ENCODE measurements at regions of chr7 and their contacts with region 1.

Region 1: DNA sequence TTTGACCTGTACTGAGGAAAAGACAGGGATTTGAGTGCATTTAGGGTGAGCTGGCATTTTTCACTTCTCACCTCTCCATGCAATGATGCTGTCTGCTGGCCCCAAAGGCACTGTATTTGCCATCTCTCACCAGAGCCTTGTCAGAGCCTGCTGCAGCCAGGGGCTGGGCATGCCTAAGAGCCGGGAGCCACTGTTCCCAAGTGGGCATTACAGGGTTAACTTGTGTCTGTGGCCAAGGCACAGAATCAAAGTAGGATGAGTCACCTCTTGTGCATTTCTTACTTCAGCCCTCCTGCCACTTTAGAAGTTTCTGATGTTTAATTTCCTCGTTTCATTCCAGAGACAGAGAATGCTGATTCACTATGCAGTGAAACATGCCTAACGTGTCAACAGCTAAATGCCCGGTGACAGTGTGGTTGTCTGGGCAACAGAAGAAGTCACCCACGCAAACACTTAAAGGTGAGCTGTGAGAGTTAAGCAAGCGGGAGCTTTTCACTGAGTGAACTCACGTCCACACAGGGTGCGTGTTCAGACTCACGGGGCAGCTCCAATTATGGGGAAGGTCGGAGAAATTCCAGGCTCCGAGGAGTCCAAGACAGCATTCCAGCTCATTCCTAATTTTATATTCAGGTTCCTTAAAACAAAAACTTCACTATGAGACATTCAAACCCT is 57.1 kb upstream of the IGFBP3 start:
- DNase-seq: peak; percentile 91 to 100
- H3K4me3 ChIP-seq: peak overlapping the region; percentile 23; the same call in 1 of the 2 replicates
- H3K27ac ChIP-seq: peak overlapping the region; percentile 97
- H3K4me1 ChIP-seq: peaks cover 52% of the 10 kb centered on the region
- H3K27me3 ChIP-seq: no peaks in the 10 kb centered on the region
- CTCF ChIP-seq: no peak

Region 2: DNA sequence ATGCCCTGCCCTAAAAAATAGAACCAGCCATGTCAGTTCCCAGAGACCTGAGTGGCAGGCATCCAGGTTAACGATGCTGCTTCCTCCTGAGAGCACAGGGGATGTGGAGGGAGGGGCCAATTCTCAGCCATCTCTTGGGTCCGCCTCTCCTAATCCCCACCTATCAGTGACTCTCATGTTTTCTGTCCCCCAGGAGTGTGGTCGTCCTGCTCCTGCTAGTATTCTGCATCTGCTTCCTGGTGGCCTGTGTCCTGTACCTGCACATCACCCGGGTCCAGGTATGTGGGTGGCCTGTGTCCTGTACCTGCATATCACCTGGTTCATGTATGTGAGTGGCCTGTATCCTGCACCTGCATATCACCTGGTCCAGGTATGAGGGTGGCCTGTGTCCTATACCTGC is 298.6 kb before region 1 on chr7:
- CTCF ChIA-PET with region 1: no interaction called
- POLR2A ChIA-PET with region 1: no interaction called
- intact Hi-C with region 1: no loop called
- DNase-seq: no peak
- H3K4me3 ChIP-seq: no peak overlapping the region
- H3K27ac ChIP-seq: no peak overlapping the region
- H3K4me1 ChIP-seq: no peaks in the 10 kb centered on the region
- H3K27me3 ChIP-seq: peaks cover 78% of the 10 kb centered on the region
- CTCF ChIP-seq: no peak

Region 3: GRCh38 chr7:45881759-45882464 is 96.2 kb before region 1 on chr7:
- CTCF ChIA-PET with region 1: no interaction called
- POLR2A ChIA-PET with region 1: interaction called, 3 read pairs
- intact Hi-C with region 1: loop called (anchors 1 kb)
- DNase-seq: peak in 1 of 2 experiments; percentile 82
- H3K4me3 ChIP-seq: no peak overlapping the region
- H3K27ac ChIP-seq: peak overlapping the region; percentile 80
- H3K4me1 ChIP-seq: peaks cover 49% of the 10 kb centered on the region
- H3K27me3 ChIP-seq: no peaks in the 10 kb centered on the region
- CTCF ChIP-seq: no peak

Region 4: GRCh38 chr7:46072683-46073082 is 94.5 kb after region 1 on chr7:
- CTCF ChIA-PET with region 1: no interaction called
- POLR2A ChIA-PET with region 1: no interaction called
- intact Hi-C with region 1: loop called (anchors 2 kb)
- DNase-seq: peak; percentile 14 to 84
- H3K4me3 ChIP-seq: no peak overlapping the region
- H3K27ac ChIP-seq: peak overlapping the region; percentile 28
- H3K4me1 ChIP-seq: peaks cover 28% of the 10 kb centered on the region
- H3K27me3 ChIP-seq: no peaks in the 10 kb centered on the region
- CTCF ChIP-seq: no peak

Region 5: DNA sequence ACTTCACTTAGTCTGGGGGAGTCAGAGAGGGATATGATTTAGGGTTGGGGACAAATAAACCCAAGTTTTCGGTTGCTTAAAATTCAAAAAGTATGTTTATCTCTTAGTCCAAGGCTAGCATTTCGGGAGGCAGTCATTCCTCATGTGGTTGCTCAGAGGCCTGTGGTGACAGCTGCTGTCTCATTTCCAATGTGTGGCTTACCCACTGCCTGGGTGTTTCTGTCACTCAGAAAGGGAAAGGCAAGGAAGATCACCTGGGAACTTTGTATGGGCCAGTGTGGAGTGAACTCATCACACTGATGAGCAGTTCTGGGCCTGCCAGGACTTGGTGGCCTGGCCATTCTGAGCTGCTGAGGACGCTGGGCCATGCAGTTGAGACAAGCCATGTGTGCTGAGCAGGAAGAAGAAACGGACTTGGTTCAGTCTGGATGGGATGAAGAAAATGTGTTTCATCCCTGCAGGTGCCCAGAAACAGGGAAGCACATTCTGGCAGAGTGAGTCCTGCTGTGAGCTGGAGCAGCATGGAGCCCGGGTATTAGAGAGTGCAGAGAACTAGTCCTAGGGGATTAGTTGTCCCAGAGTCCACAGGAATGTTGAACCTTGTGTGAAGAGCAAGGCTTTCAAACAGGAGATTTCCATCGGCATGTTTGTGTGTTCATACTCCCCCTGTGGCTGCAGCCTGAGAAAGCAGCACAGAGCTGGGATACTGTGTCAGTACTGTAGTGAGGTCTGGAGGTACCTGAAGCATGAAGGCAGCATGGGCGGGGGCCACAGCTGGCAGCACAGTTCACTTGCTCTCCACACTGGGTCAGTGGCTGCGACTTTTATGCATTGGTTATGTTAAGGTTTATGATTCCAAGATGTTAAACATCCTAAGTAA is 154.0 kb after region 1 on chr7:
- CTCF ChIA-PET with region 1: no interaction called
- POLR2A ChIA-PET with region 1: no interaction called
- intact Hi-C with region 1: no loop called
- DNase-seq: no peak
- H3K4me3 ChIP-seq: no peak overlapping the region
- H3K27ac ChIP-seq: no peak overlapping the region
- H3K4me1 ChIP-seq: peaks cover 14% of the 10 kb centered on the region
- H3K27me3 ChIP-seq: no peaks in the 10 kb centered on the region
- CTCF ChIP-seq: peak; percentile 31; the same call in 1 of the 2 replicates

Region 6: DNA sequence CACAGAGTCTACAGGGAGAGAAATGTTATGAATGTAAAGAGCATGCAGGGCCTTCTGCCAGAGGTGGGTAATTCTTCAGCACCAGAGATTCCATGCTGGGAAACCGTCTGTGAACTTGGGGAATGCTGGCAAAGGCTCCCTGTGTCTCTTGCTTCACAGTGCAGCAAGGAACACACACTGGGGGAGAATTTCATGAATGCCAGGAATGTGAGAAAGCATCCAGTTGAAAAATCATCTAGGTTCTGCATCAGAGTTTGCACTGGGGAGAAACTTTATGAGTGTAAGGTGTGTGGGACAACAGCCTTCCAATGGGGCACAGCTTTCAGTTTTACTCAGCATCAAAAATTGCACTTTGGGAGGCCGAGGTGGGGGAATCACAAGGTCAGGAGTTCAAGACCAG is 167.3 kb after region 1 on chr7:
- CTCF ChIA-PET with region 1: no interaction called
- POLR2A ChIA-PET with region 1: no interaction called
- intact Hi-C with region 1: loop called (anchors 1 kb)
- DNase-seq: peak; percentile 89 to 99
- H3K4me3 ChIP-seq: no peak overlapping the region
- H3K27ac ChIP-seq: peak overlapping the region; percentile 80
- H3K4me1 ChIP-seq: peaks cover 29% of the 10 kb centered on the region
- H3K27me3 ChIP-seq: no peaks in the 10 kb centered on the region
- CTCF ChIP-seq: no peak

Region 7: GRCh38 chr7:46253547-46253946 is 275.4 kb after region 1 on chr7:
- CTCF ChIA-PET with region 1: no interaction called
- POLR2A ChIA-PET with region 1: no interaction called
- intact Hi-C with region 1: no loop called
- DNase-seq: peak; percentile 34 to 79
- H3K4me3 ChIP-seq: no peak overlapping the region
- H3K27ac ChIP-seq: no peak overlapping the region
- H3K4me1 ChIP-seq: peaks cover 25% of the 10 kb centered on the region
- H3K27me3 ChIP-seq: no peaks in the 10 kb centered on the region
- CTCF ChIP-seq: no peak

Region 8: DNA sequence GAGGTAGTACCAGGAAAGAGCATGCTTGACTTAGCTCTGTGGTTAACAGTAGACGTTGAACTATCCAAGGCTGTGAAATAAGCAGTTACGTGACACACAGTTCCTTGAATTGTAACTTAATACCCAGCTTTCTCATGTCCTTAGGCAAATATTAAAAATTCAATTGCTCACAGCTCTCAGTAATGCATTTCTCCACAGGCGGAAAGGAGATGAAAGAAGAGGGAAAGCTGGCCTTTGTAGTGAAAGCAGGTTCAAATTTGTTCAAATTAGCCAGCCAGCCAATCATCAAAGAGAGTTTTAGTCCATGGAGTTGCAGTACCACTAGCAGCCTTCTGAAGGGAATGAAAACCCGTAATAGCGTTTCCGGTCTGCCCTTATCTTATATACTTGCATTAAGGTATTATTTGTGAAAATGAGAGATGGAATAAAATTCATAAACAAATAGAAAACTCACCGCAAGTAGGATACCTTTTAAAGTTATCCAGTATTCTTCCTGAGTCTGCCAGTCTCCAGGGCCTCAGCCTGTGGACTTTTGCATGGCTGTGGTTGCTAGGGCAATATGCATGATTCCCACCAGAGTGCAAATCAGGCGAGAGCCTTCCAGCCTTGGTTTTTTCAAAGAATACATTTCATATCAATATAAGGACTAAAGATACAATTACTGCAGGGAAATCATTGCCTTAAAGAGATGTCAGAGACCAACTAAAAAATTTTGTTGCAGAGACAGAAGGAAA is 808.2 kb after region 1 on chr7:
- CTCF ChIA-PET with region 1: no interaction called
- POLR2A ChIA-PET with region 1: no interaction called
- intact Hi-C with region 1: loop called (anchors 1 kb)
- DNase-seq: peak; percentile 40 to 95
- H3K4me3 ChIP-seq: no peak overlapping the region
- H3K27ac ChIP-seq: peak overlapping the region; percentile 60
- H3K4me1 ChIP-seq: peaks cover 35% of the 10 kb centered on the region
- H3K27me3 ChIP-seq: no peaks in the 10 kb centered on the region
- CTCF ChIP-seq: no peak